H1 (cell line): ENCODE measurements at regions of chr1 and their contacts with region 1.

Region 1: GRCh38 chr1:22673486-22674409 is 20.7 kb downstream of the C1QB start:
- DNase-seq: peak in 1 of 2 experiments; percentile 84
- H3K4me3 ChIP-seq: peak overlapping the region in 1 of 4 experiments; percentile 10; a peak in 1 of 8 replicates
- H3K27ac ChIP-seq: no peak overlapping the region
- H3K4me1 ChIP-seq: peaks cover 0 to 10% (median 5%) of the 10 kb centered on the region in 4 experiments; a peak in 4 of 7 replicates
- H3K27me3 ChIP-seq: no peaks in the 10 kb centered on the region; a peak in 1 of 7 replicates
- CTCF ChIP-seq: peak; percentile 59 to 76 (median 73)
- EP300 ChIP-seq: no peak
- POLR2A ChIP-seq: no peak
- RAD21 ChIP-seq: peak; percentile 81

Region 2: DNA sequence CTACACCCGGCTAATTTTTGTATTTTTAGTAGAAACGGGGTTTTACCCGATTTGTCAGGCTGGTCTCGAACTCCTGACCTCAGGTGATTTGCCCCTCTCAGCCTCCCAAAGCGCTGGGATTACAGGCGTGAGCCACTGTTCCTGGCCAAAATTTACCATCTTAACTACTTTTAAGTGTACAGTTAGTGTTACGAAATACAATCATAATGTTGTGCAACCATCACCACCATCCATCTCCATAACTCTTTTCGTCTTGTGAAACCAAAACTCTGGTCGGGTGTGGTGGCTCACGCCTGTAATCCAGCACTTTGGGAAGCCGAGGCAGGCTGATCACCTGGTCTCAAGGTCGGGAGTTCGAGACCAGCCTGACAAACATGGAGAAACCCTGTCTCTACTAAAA is 236.2 kb before region 1 on chr1:
- CTCF ChIA-PET with region 1: no interaction called
- POLR2A ChIA-PET with region 1: no interaction called
- DNase-seq: no peak
- H3K4me3 ChIP-seq: no peak overlapping the region
- H3K27ac ChIP-seq: no peak overlapping the region
- H3K4me1 ChIP-seq: peaks cover 1 to 6% (median 4%) of the 10 kb centered on the region in 4 experiments; a peak in 3 of 7 replicates
- H3K27me3 ChIP-seq: no peaks in the 10 kb centered on the region
- CTCF ChIP-seq: no peak
- EP300 ChIP-seq: no peak
- POLR2A ChIP-seq: no peak
- RAD21 ChIP-seq: no peak

Region 3: DNA sequence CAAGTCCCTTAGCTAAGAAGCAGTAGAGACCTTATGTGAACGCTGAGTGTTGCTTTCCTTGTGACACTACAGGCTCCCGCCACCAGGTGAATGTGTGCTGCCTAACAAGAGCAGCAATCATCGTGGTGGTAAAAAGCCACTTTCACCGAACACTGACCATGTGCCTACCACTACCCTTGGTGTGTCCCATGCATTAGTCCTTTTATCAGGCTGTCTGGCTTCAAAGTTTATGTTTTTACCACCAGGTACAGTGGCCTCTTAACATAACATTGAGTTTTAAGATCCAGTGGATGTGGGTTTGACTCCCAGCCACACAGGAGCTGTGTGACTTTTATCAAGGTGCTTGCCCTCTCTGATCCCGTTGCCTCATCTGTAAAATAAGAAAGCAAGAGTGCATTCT is 19.1 kb before region 1 on chr1:
- CTCF ChIA-PET with region 1: interaction called, 23 read pairs
- POLR2A ChIA-PET with region 1: no interaction called
- DNase-seq: no peak
- H3K4me3 ChIP-seq: no peak overlapping the region
- H3K27ac ChIP-seq: no peak overlapping the region
- H3K4me1 ChIP-seq: no peaks in the 10 kb centered on the region; a peak in 1 of 7 replicates
- H3K27me3 ChIP-seq: no peaks in the 10 kb centered on the region; a peak in 3 of 7 replicates
- CTCF ChIP-seq: peak; percentile 22 to 68 (median 51)
- EP300 ChIP-seq: no peak
- POLR2A ChIP-seq: no peak
- RAD21 ChIP-seq: peak; percentile 13 to 33; a peak in 1 of 4 replicates

Region 4: GRCh38 chr1:22685591-22686059 is 11.9 kb after region 1 on chr1:
- CTCF ChIA-PET with region 1: interaction called, 22 read pairs
- POLR2A ChIA-PET with region 1: no interaction called
- DNase-seq: no peak
- H3K4me3 ChIP-seq: no peak overlapping the region
- H3K27ac ChIP-seq: no peak overlapping the region
- H3K4me1 ChIP-seq: peaks cover 0 to 2% (median under 1%) of the 10 kb centered on the region in 4 experiments; a peak in 2 of 7 replicates
- H3K27me3 ChIP-seq: no peaks in the 10 kb centered on the region
- CTCF ChIP-seq: no peak
- EP300 ChIP-seq: no peak
- POLR2A ChIP-seq: no peak
- RAD21 ChIP-seq: no peak

Region 5: GRCh38 chr1:22731924-22732720 is 58.4 kb after region 1 on chr1:
- CTCF ChIA-PET with region 1: interaction called, 12 read pairs
- POLR2A ChIA-PET with region 1: no interaction called
- DNase-seq: no peak
- H3K4me3 ChIP-seq: no peak overlapping the region
- H3K27ac ChIP-seq: no peak overlapping the region
- H3K4me1 ChIP-seq: peaks cover 0 to 12% (median 5%) of the 10 kb centered on the region in 4 experiments; a peak in 5 of 7 replicates
- H3K27me3 ChIP-seq: no peaks in the 10 kb centered on the region
- CTCF ChIP-seq: peak; percentile 66 to 82 (median 68)
- EP300 ChIP-seq: no peak
- POLR2A ChIP-seq: no peak
- RAD21 ChIP-seq: peak; percentile 62 to 78

Region 6: GRCh38 chr1:22794647-22795365 is 121.1 kb after region 1 on chr1:
- CTCF ChIA-PET with region 1: no interaction called
- POLR2A ChIA-PET with region 1: no interaction called
- DNase-seq: no peak
- H3K4me3 ChIP-seq: no peak overlapping the region
- H3K27ac ChIP-seq: no peak overlapping the region
- H3K4me1 ChIP-seq: peaks cover 0 to 28% (median 10%) of the 10 kb centered on the region in 4 experiments; a peak in 6 of 7 replicates
- H3K27me3 ChIP-seq: no peaks in the 10 kb centered on the region
- CTCF ChIP-seq: no peak
- EP300 ChIP-seq: no peak
- POLR2A ChIP-seq: no peak
- RAD21 ChIP-seq: no peak

Region 7: DNA sequence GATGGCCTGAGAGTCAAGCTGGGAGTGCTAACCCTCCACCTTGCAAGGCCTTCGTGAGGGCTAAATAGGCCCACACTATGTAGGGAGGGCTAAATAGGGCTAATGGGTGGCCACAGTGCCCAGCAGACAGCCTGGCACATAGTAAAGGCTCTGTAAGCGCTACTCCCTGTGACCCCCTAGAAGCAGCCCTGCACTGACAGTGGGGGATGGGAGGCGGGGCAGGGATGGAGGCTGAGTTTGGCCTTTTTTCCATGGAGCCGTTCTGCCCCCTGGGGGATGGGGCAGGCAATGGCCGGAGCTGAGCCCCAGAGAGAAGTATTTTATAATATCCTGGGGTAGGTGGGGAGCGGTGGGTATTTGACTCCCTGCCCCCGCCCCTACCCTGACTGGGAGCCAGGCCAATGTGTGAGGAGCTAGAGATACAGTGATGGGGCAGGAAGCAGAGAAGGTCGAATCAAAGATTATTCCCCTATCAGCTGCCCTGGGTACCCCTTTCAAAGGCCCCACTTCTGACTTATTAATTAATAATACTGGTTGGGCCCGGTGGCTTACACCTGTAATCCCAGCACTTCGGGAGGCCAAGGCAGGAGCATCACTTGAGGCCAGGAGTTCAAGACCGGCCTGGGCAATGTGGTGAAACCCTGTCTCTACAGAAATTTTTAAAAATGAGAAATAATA is 256.6 kb after region 1 on chr1:
- CTCF ChIA-PET with region 1: interaction called, 32 read pairs
- POLR2A ChIA-PET with region 1: no interaction called
- DNase-seq: peak; percentile 44 to 95
- H3K4me3 ChIP-seq: no peak overlapping the region
- H3K27ac ChIP-seq: no peak overlapping the region
- H3K4me1 ChIP-seq: no peaks in the 10 kb centered on the region
- H3K27me3 ChIP-seq: no peaks in the 10 kb centered on the region; a peak in 1 of 7 replicates
- CTCF ChIP-seq: peak; percentile 81 to 93 (median 85)
- EP300 ChIP-seq: 0 out of 3 replicates have a peak, but pooled peaks of 1 of the 2 experiments have one; percentile 46
- POLR2A ChIP-seq: no peak
- RAD21 ChIP-seq: peak; percentile 94 to 98

Region 8: GRCh38 chr1:22963044-22963677 is 289.4 kb after region 1 on chr1:
- CTCF ChIA-PET with region 1: interaction called, 39 read pairs
- POLR2A ChIA-PET with region 1: no interaction called
- DNase-seq: no peak
- H3K4me3 ChIP-seq: no peak overlapping the region
- H3K27ac ChIP-seq: no peak overlapping the region
- H3K4me1 ChIP-seq: no peaks in the 10 kb centered on the region
- H3K27me3 ChIP-seq: peaks cover 0 to 2% (median 0%) of the 10 kb centered on the region in 4 experiments; a peak in 2 of 7 replicates
- CTCF ChIP-seq: no peak
- EP300 ChIP-seq: no peak
- POLR2A ChIP-seq: no peak
- RAD21 ChIP-seq: no peak